Mammary epithelial cell (primary cell): ENCODE measurements at regions of chr5 and their contacts with region 1.

Region 1: GRCh38 chr5:141757402-141757801 is 75.4 kb upstream of the ARAP3 start:
- DNase-seq: peak; percentile 62
- H3K4me3 ChIP-seq: no peak overlapping the region
- H3K27ac ChIP-seq: no peak overlapping the region
- H3K4me1 ChIP-seq: no peaks in the 10 kb centered on the region
- H3K27me3 ChIP-seq: peaks cover 24% of the 10 kb centered on the region
- CTCF ChIP-seq: peak; percentile 42 to 70

Region 2: GRCh38 chr5:141713616-141714309 is 43.6 kb before region 1 on chr5:
- CTCF ChIA-PET with region 1: no interaction called
- dilution Hi-C with region 1: no loop called
- in situ Hi-C with region 1: no loop called
- intact Hi-C with region 1: loop called (anchors 5 kb)
- DNase-seq: peak; percentile 96
- H3K4me3 ChIP-seq: no peak overlapping the region
- H3K27ac ChIP-seq: peak overlapping the region; percentile 77
- H3K4me1 ChIP-seq: peaks cover 50% of the 10 kb centered on the region
- H3K27me3 ChIP-seq: no peaks in the 10 kb centered on the region
- CTCF ChIP-seq: no peak

Region 3: GRCh38 chr5:141772281-141772680 is 14.9 kb after region 1 on chr5:
- CTCF ChIA-PET with region 1: no interaction called
- dilution Hi-C with region 1: no loop called
- in situ Hi-C with region 1: no loop called
- intact Hi-C with region 1: no loop called
- DNase-seq: no peak
- H3K4me3 ChIP-seq: no peak overlapping the region
- H3K27ac ChIP-seq: no peak overlapping the region
- H3K4me1 ChIP-seq: no peaks in the 10 kb centered on the region
- H3K27me3 ChIP-seq: no peaks in the 10 kb centered on the region
- CTCF ChIP-seq: no peak

Region 4: GRCh38 chr5:141787376-141787775 is 30.0 kb after region 1 on chr5:
- CTCF ChIA-PET with region 1: no interaction called
- dilution Hi-C with region 1: loop called (anchors 5 kb)
- in situ Hi-C with region 1: no loop called
- intact Hi-C with region 1: no loop called
- DNase-seq: no peak
- H3K4me3 ChIP-seq: no peak overlapping the region
- H3K27ac ChIP-seq: no peak overlapping the region
- H3K4me1 ChIP-seq: peaks cover 9% of the 10 kb centered on the region
- H3K27me3 ChIP-seq: no peaks in the 10 kb centered on the region
- CTCF ChIP-seq: no peak

Region 5: GRCh38 chr5:141835928-141836670 is 78.7 kb after region 1 on chr5:
- CTCF ChIA-PET with region 1: no interaction called
- dilution Hi-C with region 1: loop called (anchors 5 kb)
- in situ Hi-C with region 1: no loop called
- intact Hi-C with region 1: no loop called
- DNase-seq: no peak
- H3K4me3 ChIP-seq: no peak overlapping the region
- H3K27ac ChIP-seq: no peak overlapping the region
- H3K4me1 ChIP-seq: peaks cover 8% of the 10 kb centered on the region
- H3K27me3 ChIP-seq: no peaks in the 10 kb centered on the region
- CTCF ChIP-seq: no peak

Region 6: DNA sequence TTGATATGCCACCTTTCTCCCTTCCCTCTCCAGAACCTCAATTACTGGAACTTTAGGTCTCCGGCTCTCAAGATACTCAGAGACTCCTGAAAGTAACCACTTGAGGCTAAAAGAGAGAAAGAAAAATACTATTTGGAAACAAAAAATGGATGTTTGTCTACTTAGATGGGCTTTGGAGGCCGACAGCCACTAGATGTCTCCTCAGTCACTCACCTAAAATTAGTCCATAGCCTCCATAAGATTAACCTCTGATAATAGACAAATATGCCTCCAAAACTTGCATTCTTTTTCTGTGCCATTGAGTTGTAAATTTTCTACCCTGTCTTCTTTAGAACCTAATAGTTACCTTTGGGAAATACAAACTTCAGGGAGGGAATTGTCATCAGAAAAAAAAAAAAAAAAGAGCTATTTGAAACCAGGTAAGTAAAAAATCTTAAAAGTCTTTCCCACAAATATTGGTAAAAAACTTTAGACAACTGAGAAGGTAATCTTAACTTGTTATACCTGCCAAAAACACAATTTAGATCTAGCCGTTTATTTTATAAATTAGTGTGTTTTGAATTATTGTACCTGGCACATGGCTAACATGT is 132.0 kb after region 1 on chr5:
- CTCF ChIA-PET with region 1: interaction called, 12 read pairs
- dilution Hi-C with region 1: no loop called
- in situ Hi-C with region 1: no loop called
- intact Hi-C with region 1: no loop called
- DNase-seq: no peak
- H3K4me3 ChIP-seq: no peak overlapping the region
- H3K27ac ChIP-seq: no peak overlapping the region
- H3K4me1 ChIP-seq: no peaks in the 10 kb centered on the region
- H3K27me3 ChIP-seq: no peaks in the 10 kb centered on the region
- CTCF ChIP-seq: peak; percentile 33 to 69